Heart left ventricle (tissue), 16 donors: ENCODE measurements at regions of chr5 and their contacts with region 1.

Region 1: GRCh38 chr5:96614110-96614691 is 48.0 kb upstream of the CAST start:
- DNase-seq: peak in 3 of 5 donors; percentile 46 to 60 (median 58)
- ATAC-seq: peak; percentile 63 to 90 (median 81)
- H3K4me3 ChIP-seq: peak overlapping the region in 4 of 12 donors; percentile 4 to 29 (median 23)
- H3K27ac ChIP-seq: peak overlapping the region in 11 of 12 donors; percentile 1 to 72 (median 60)
- H3K4me1 ChIP-seq: peaks cover 0 to 22% (median 16%) of the 10 kb centered on the region in 12 donors
- H3K27me3 ChIP-seq: no peaks in the 10 kb centered on the region
- CTCF ChIP-seq: peak; percentile 31 to 73 (median 60)
- POLR2A ChIP-seq: no peak

Region 2: GRCh38 chr5:96344678-96345577 is 269.3 kb before region 1 on chr5:
- intact Hi-C with region 1: no loop called
- DNase-seq: peak in 1 of 5 donors; percentile 18
- ATAC-seq: peak; percentile 76 to 93 (median 88)
- H3K4me3 ChIP-seq: no peak overlapping the region
- H3K27ac ChIP-seq: no peak overlapping the region
- H3K4me1 ChIP-seq: peaks cover 0 to 3% (median 0%) of the 10 kb centered on the region in 12 donors
- H3K27me3 ChIP-seq: no peaks in the 10 kb centered on the region
- CTCF ChIP-seq: peak; percentile 30 to 68 (median 58)
- POLR2A ChIP-seq: no peak

Region 3: DNA sequence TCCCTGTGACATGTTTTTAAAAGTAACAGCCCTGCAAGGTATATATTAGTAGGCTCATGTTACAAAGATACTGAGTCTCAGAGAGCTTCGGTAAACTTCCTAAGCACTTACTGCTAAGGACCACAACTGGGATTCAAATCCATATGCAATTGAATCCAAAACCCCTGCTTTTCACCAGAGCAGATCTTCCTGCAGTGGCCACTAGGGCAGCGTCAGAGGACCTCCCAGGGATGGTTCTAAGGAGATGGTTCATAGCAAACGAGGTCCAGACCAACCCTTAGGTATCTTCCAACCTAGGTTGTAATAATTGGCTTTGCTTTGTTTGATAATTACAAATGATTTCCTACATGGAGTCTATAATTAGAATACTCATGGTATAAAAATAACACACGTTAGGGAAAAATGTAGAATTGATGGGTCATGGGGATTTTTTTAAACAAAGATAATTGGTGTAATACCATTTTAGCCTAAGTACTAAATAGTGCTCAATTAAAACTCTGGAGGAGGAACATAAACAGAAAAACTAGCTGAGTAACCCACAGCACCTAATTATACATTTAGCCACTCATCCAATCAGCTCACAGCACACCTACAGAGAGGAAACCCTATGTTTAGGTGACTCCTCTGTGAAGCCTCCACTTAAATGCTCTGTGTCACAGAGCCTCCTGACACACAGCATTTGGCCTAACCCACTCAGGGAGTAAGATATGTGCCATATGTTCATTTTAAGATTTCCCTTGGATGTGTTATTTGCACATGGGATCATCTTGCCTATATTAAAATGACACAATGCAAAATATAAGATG is 38.0 kb after region 1 on chr5:
- intact Hi-C with region 1: loop called in 1 of 10 experiments (anchors 5 kb)
- DNase-seq: no peak
- ATAC-seq: no peak
- H3K4me3 ChIP-seq: no peak overlapping the region
- H3K27ac ChIP-seq: no peak overlapping the region
- H3K4me1 ChIP-seq: peaks cover 0 to 58% (median 0%) of the 10 kb centered on the region in 12 donors
- H3K27me3 ChIP-seq: no peaks in the 10 kb centered on the region
- CTCF ChIP-seq: peak in 7 of 12 donors; percentile 4 to 30 (median 21)
- POLR2A ChIP-seq: no peak

Region 4: DNA sequence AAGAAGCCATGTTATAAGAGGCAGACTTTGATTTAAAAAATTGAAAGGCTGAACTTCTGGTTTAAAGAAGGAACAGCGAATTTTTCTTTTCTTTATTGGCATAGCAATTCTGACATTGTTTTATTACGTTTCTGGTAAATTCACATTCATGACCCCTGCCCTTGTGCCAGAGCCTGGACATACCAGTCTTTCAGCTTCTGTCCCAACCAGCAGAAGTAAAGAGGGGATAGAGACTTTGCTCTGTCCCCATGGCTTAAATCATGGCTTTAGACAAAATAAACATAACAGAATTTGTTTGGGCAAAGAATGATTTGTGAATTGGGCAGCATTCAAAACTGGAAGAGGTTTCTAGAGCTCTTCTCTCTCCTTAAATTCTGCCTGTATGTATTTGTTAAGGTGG is 63.3 kb after region 1 on chr5:
- intact Hi-C with region 1: loop called in 3 of 10 experiments (anchors 5 to 10 kb)
- DNase-seq: no peak
- ATAC-seq: no peak
- H3K4me3 ChIP-seq: no peak overlapping the region
- H3K27ac ChIP-seq: no peak overlapping the region
- H3K4me1 ChIP-seq: peaks cover 0 to 34% (median 12%) of the 10 kb centered on the region in 12 donors
- H3K27me3 ChIP-seq: no peaks in the 10 kb centered on the region
- CTCF ChIP-seq: no peak
- POLR2A ChIP-seq: no peak

Region 5: GRCh38 chr5:96714951-96715451 is 100.8 kb after region 1 on chr5:
- intact Hi-C with region 1: no loop called
- DNase-seq: peak in 4 of 5 donors; percentile 60 to 74 (median 68)
- ATAC-seq: peak; percentile 68 to 90 (median 84)
- H3K4me3 ChIP-seq: no peak overlapping the region
- H3K27ac ChIP-seq: peak overlapping the region; percentile 17 to 98 (median 72)
- H3K4me1 ChIP-seq: peaks cover 8 to 99% (median 71%) of the 10 kb centered on the region in 12 donors
- H3K27me3 ChIP-seq: no peaks in the 10 kb centered on the region
- CTCF ChIP-seq: no peak
- POLR2A ChIP-seq: peak in 1 of 2 donors; percentile 18

Region 6: GRCh38 chr5:96734871-96735325 is 120.7 kb after region 1 on chr5:
- intact Hi-C with region 1: loop called in 5 of 10 experiments (anchors 5 to 10 kb)
- DNase-seq: no peak
- ATAC-seq: peak in 2 of 4 donors; percentile 11 to 24
- H3K4me3 ChIP-seq: no peak overlapping the region
- H3K27ac ChIP-seq: peak overlapping the region in 1 of 12 donors; percentile 5
- H3K4me1 ChIP-seq: peaks cover 0 to 35% (median 12%) of the 10 kb centered on the region in 12 donors
- H3K27me3 ChIP-seq: no peaks in the 10 kb centered on the region
- CTCF ChIP-seq: no peak
- POLR2A ChIP-seq: no peak

Region 7: GRCh38 chr5:97149709-97150108 is 535.5 kb after region 1 on chr5:
- intact Hi-C with region 1: loop called in 1 of 10 experiments (anchors 10 kb)
- DNase-seq: no peak
- ATAC-seq: no peak
- H3K4me3 ChIP-seq: no peak overlapping the region
- H3K27ac ChIP-seq: no peak overlapping the region
- H3K4me1 ChIP-seq: no peaks in the 10 kb centered on the region
- H3K27me3 ChIP-seq: no peaks in the 10 kb centered on the region
- CTCF ChIP-seq: no peak
- POLR2A ChIP-seq: no peak